Left ventricle myocardium superior (tissue), 1 donor: ENCODE measurements at regions of chr3 and their contacts with region 1.

Region 1: DNA sequence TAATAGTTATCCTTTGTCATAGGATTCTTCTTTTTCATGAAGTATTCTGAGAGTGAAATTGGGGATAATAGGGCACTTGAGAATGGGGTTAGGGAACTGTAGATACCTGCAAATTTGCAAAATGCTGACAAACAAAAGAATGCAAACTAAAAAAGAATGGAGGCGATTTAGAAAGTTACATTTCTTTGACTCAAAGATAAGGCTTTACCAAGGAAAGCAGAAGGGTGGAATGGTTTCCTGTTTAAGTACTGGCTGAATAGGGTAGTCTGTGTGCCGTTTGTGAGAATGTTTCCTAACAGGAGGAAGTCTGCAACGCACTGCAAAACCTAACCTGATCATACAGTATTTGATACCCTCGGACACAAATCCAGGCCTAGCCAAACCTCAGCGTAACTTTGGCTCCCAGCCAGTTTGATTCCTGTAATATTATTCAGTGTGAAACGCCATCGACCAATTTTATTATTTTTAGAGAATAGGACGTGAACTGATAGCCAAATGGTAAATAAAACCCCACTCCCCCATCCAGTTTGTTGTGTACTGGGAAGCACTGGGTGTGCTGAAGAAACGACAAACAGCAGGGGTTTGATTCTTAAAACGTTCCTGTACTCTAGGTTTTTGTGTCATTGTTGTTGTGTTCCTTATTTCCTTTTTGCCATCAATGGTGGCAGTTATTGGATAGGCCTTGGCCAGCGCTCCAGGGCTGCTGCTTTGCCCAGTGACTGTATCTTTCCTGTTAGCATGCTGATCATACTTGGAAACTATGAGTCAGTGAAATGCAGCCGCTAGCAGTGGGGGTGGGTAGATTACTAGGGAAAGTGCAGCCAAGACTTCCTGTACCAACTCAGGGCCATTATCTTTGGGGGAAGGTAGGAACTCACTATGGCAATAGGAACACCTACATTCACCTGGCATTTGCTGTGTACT is 148.0 kb upstream of the TBL1XR1 start:
- DNase-seq: peak; percentile 89
- ATAC-seq: peak; percentile 98

Region 2: GRCh38 chr3:176697284-176697889 is 647.9 kb before region 1 on chr3:
- intact Hi-C with region 1: no loop called
- DNase-seq: no peak
- ATAC-seq: no peak

Region 3: GRCh38 chr3:177197041-177197727 is 148.1 kb before region 1 on chr3 and contains the start of gene TBL1XR1:
- intact Hi-C with region 1: loop called (anchors 5 kb)
- DNase-seq: peak; percentile 93
- ATAC-seq: peak; percentile 85
- total RNA-seq, gene TBL1XR1: 99.6 TPM

Region 4: GRCh38 chr3:177294221-177294620 is 51.1 kb before region 1 on chr3:
- intact Hi-C with region 1: loop called (anchors 10 kb)
- DNase-seq: peak; percentile 62
- ATAC-seq: peak; percentile 94

Region 5: DNA sequence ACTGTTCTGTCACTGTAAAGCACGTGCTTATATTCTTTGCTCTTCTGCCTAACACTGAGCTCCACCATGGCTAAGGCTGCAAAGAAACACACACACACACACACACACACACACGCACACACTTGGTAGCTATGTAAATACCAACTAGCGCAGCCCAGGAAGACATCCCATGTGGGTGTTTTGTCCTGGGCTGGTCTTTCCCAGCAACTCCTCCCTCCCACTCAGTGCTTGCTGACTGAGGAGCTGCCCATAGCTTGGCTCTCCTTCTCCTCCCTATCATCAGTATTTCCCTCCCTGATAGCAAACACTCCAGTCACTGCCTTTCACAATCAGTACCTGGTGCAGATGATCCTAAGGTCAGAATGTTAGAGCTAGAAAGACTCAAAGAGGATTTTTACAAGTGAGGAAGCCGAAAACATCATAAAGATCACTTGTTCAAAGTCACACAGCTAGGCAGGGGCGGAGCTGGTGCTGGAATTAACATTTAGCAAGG is 229.0 kb after region 1 on chr3:
- intact Hi-C with region 1: no loop called
- DNase-seq: no peak
- ATAC-seq: peak; percentile 72